Activated CD4-positive, alpha-beta T cell treated with anti-CD3 and anti-CD28 coated beads for 36 hours (primary cell): ENCODE measurements at regions of chr19 and their contacts with region 1.

Region 1: DNA sequence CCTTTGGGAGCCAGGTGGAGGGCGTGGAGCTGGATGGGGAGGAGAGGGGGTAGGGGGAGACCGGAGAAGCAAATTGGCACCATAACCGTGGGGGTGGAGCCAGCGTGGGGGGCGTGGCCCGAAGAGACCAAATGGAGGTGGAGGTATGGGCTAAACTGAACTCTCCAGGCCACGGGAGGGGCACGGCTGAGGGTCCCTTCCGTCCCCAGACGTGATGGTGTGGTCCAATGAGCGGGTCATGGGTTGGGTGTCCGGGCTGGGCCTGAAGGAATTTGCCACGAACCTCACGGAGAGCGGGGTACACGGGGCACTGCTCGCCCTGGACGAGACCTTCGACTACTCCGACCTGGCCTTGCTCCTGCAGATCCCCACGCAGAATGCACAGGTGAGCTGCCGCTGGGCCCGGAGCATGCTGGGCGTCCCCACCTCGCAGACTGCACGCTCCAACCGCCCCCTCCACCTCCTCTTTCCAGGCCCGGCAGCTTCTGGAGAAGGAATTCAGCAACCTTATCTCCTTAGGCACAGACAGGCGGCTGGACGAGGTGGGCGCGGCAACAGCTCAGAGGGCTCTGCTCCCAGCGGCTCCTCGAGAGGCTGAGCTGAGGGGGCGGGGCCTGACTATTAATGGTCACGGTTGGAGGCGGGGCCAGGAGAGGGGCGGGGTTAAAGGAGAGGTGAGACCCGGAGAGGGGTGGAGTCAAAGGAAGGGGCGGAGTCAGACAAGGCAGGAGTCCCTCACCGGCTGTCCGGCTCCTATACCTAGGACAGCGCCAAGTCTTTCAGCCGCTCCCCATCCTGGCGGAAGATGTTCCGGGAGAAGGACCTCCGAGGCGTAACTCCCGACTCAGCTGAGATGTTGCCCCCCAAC is 6.2 kb downstream of the HRC start:
- DNase-seq: peak; percentile 93
- ATAC-seq: peak; percentile 53
- H3K4me3 Mint-ChIP-seq: peak overlapping the region; percentile 67
- H3K27ac Mint-ChIP-seq: no peak overlapping the region
- H3K4me1 Mint-ChIP-seq: peaks cover 28% of the 10 kb centered on the region
- H3K27me3 Mint-ChIP-seq: peaks cover 58% of the 10 kb centered on the region

Region 2: GRCh38 chr19:48899781-48900476 is 249.1 kb before region 1 on chr19 and contains the start of gene NUCB1:
- CTCF ChIA-PET with region 1: no interaction called
- POLR2A ChIA-PET with region 1: no interaction called
- intact Hi-C with region 1: no loop called
- DNase-seq: peak; percentile 100
- ATAC-seq: peak; percentile 95
- H3K4me3 Mint-ChIP-seq: peak within 1 kb of the TSS; percentile 99
- H3K27ac Mint-ChIP-seq: peak within 1 kb of the TSS; percentile 98
- H3K4me1 Mint-ChIP-seq: peaks cover 34% of the 10 kb centered on the region
- H3K27me3 Mint-ChIP-seq: peaks cover 5% of the 10 kb centered on the region
- total RNA-seq, gene NUCB1: 115 to 118 TPM

Region 3: DNA sequence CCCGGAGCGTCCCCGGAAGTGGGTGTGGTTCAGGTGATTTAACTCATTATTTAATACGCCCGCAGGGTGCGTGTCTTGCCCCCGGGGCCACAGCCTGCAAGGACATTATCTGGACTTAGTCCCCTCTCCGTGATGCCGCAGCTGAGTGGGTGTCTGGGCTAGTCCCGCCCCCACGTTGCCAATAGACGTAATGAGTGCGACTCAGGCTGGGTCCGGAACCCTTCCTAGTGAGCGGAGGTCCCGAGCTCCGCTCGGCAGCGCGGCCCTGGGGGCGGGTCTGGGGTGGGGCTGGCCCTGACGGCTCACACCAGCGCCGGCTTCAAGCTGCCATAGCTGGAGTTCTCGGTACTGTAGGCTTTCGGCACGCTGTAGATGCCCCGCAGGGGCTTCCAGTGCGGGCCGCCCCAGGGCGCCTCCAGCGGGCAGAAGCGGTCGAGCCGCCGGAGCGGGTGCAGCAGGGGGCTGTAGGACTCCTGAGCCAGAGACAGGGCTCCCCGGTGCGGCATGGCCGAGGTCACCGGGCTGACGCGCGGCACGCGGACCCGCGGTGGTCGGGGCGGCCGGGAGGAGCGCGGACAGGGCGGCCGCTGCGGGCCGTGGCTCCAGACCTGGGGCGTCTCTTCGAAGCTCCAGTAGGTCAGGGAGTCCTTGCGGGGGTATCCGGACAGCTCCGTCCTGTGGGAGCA is 131.2 kb before region 1 on chr19:
- CTCF ChIA-PET with region 1: no interaction called
- POLR2A ChIA-PET with region 1: no interaction called
- intact Hi-C with region 1: loop called in 1 of 2 experiments (anchors 5 kb)
- DNase-seq: peak; percentile 80
- ATAC-seq: peak; percentile 76
- H3K4me3 Mint-ChIP-seq: peak overlapping the region; percentile 76
- H3K27ac Mint-ChIP-seq: no peak overlapping the region
- H3K4me1 Mint-ChIP-seq: peaks cover 16% of the 10 kb centered on the region
- H3K27me3 Mint-ChIP-seq: peaks cover 6% of the 10 kb centered on the region

Region 4: DNA sequence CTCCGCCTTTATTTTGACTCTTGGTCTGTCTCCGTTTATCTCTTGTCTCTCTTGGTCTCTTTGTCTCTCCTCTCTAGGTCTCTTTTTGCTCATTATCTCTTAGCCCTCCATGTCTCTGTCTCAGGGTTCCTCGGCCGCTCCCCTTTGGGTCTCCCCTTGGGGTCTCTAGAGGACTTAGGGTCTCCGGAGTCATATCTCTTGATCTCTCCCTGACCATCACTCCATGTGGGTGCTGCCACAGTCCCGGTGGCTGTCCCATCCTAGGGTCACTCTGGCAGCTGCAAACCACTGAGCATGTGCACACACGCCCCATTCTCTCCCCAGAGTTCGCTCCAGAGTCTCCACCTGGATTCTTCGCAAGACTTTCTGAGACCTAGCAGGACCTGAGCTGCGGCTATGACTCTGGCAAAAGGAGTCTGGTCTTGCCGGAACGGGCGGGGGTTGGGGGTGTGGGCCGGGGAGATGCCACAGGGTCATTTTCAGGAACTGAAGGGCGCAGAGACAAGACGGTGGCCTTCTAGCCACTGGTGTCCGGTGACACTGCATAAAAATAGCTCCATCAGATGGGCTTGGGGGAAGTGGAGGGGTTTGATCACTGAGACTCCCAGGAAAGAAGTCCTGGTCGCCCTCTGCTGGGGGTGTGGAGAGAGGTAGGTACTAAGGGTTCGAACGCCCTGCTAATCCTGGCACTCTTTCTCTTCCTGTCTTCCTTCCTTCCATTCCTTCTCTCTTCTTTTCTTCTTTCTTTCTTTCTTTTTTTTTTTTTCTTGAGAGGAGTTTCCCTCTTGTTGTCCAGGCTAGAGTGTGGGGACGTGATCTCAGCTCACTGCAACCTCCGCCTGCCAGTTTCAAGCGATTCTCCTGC is 75.3 kb before region 1 on chr19:
- CTCF ChIA-PET with region 1: no interaction called
- POLR2A ChIA-PET with region 1: no interaction called
- intact Hi-C with region 1: loop called in 1 of 2 experiments (anchors 2 kb)
- DNase-seq: peak; percentile 49
- ATAC-seq: no peak
- H3K4me3 Mint-ChIP-seq: no peak overlapping the region
- H3K27ac Mint-ChIP-seq: no peak overlapping the region
- H3K4me1 Mint-ChIP-seq: peaks cover 7% of the 10 kb centered on the region
- H3K27me3 Mint-ChIP-seq: peaks cover 50% of the 10 kb centered on the region

Region 5: GRCh38 chr19:49118565-49119410 is 30.2 kb before region 1 on chr19 and contains the start of gene C19orf73:
- CTCF ChIA-PET with region 1: interaction called, 5 read pairs
- POLR2A ChIA-PET with region 1: no interaction called
- intact Hi-C with region 1: loop called in 1 of 2 experiments (anchors 1 kb)
- DNase-seq: peak; percentile 98
- ATAC-seq: peak; percentile 85
- H3K4me3 Mint-ChIP-seq: peak within 1 kb of the TSS; percentile 80
- H3K27ac Mint-ChIP-seq: peak within 1 kb of the TSS; percentile 84
- H3K4me1 Mint-ChIP-seq: peaks cover 28% of the 10 kb centered on the region
- H3K27me3 Mint-ChIP-seq: peaks cover 8% of the 10 kb centered on the region
- total RNA-seq, gene C19orf73: 1.7 to 2.0 TPM

Region 6: DNA sequence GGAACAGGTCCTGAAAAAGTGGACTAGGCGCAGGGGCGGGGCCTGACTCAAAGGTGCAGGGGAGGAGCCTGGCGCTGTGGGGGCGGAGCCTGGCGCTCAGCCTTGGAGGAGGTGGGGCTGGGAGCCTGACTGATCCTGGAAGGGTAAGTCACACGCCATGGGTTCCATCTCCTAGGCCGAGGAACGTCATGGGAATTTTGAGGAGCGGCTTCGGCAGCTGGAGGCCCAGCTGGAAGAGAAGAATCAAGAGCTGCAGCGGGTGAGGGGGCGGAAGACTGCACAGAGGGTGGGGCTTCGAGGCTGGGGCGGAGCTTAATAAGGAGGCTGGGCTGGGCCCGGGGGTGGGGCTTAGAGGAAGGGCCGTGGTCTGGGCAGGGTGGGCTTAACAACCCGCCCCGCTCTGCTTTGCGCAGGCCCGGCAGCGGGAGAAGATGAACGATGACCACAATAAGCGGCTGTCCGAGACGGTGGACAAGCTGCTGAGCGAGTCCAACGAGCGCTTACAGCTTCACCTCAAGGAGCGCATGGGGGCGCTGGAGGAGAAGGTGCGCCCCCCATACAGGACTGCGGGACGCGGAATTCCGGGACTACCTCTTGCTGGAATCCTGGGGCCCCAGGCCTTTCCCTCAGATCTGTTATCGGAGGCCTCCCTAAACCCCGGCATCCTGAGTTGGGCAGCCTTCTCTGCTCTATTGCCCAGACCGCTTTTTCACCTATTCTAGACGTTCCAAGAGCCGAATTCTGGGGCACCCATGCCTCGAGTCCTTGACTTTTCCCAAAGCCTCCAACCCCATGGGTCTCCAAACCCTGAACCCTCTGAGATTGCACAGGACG is 15.2 kb before region 1 on chr19:
- CTCF ChIA-PET with region 1: interaction called, 21 read pairs
- POLR2A ChIA-PET with region 1: interaction called, 3 read pairs
- intact Hi-C with region 1: loop called in 1 of 2 experiments (anchors 1 kb)
- DNase-seq: peak; percentile 83
- ATAC-seq: peak; percentile 85
- H3K4me3 Mint-ChIP-seq: peak overlapping the region; percentile 59
- H3K27ac Mint-ChIP-seq: no peak overlapping the region
- H3K4me1 Mint-ChIP-seq: peaks cover 14% of the 10 kb centered on the region
- H3K27me3 Mint-ChIP-seq: peaks cover 1% of the 10 kb centered on the region

Region 7: DNA sequence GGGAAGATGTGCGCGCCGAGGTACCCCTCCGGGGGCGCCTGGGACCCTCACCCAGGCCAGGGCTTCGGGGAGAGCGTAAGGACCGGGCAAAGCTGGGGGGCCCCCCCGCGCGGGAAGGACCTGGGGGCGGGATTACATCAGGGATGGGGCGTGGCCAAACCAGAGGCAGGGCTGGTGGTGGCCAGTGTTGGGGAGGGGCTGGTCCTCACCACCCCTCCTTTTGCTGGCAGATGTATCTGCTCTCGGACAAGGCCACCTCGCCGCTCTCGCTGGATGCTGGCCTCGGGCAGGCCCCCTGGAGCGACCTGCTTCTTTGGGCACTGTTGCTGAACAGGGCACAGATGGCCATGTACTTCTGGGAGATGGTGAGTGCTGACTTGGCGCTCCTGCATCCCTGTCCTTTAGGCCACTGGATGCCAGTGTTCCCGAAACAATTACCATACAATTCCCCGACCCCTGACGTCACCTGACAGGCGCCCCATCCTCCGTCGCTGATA is 33.9 kb after region 1 on chr19:
- CTCF ChIA-PET with region 1: no interaction called
- POLR2A ChIA-PET with region 1: no interaction called
- intact Hi-C with region 1: no loop called
- DNase-seq: no peak
- ATAC-seq: no peak
- H3K4me3 Mint-ChIP-seq: no peak overlapping the region
- H3K27ac Mint-ChIP-seq: no peak overlapping the region
- H3K4me1 Mint-ChIP-seq: no peaks in the 10 kb centered on the region
- H3K27me3 Mint-ChIP-seq: peaks cover 8% of the 10 kb centered on the region

Region 8: DNA sequence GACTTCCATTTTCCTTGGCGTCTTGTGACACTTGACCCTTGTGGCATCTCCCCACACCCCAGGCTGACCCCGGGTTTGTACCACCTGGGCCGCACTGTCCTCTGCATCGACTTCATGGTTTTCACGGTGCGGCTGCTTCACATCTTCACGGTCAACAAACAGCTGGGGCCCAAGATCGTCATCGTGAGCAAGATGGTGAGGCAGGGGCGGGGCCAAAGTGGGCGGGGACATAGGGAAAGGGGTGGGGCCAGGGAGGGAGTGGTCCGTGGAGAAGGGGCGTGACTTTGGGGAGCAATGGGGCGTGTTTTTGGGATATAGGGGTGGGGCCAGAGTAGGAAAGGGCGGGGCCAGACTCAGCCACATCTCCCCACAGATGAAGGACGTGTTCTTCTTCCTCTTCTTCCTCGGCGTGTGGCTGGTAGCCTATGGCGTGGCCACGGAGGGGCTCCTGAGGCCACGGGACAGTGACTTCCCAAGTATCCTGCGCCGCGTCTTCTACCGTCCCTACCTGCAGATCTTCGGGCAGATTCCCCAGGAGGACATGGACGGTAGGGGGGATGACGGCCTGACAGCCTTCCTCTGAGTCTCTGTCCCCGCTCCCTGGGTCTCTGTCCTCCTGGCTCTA is 51.3 kb after region 1 on chr19:
- CTCF ChIA-PET with region 1: interaction called, 6 read pairs
- POLR2A ChIA-PET with region 1: no interaction called
- intact Hi-C with region 1: loop called in 1 of 2 experiments (anchors 2 kb)
- DNase-seq: peak; percentile 63
- ATAC-seq: peak; percentile 78
- H3K4me3 Mint-ChIP-seq: no peak overlapping the region
- H3K27ac Mint-ChIP-seq: no peak overlapping the region
- H3K4me1 Mint-ChIP-seq: peaks cover 3% of the 10 kb centered on the region
- H3K27me3 Mint-ChIP-seq: peaks cover 1% of the 10 kb centered on the region

Region 9: GRCh38 chr19:49264258-49264657 is 115.2 kb after region 1 on chr19:
- CTCF ChIA-PET with region 1: no interaction called
- POLR2A ChIA-PET with region 1: no interaction called
- intact Hi-C with region 1: no loop called
- DNase-seq: no peak
- ATAC-seq: no peak
- H3K4me3 Mint-ChIP-seq: no peak overlapping the region
- H3K27ac Mint-ChIP-seq: no peak overlapping the region
- H3K4me1 Mint-ChIP-seq: no peaks in the 10 kb centered on the region
- H3K27me3 Mint-ChIP-seq: peaks cover 18% of the 10 kb centered on the region

Region 10: DNA sequence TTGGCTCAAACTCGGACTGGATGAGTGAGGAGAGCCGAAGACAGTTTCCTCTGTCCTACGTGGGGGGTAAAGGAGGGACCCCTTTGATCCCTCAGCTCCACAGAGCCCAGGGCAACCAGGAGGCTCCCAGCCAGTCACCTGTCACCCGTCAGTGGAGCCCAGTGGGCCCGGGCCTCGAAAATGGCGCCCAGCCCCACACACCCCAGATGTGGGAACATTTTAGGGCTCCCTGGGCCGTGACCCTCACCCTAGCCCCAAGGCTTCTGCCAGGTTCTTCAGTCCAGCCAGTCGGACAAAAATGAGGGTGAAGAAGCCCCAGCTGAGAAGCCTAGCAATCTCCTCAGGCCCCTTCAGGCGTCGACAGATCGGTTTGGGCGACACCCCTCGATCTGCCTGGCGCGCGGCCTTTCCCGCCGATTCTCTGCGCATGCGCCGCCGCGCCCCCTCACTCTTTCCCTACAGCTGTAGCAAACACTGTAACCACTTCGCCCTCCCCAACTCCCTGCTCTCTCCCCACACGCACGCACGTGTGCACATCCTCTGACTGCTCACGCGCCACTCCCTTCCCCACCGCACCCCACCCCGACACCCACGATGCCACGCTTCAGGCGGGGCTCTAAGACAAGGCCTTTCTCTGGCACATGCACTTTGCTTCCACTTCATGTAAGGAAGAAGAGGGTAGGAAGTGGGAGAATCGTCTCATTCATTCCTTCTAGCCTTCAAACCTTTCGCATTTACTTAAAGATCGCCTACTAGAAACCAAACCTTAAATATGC is 176.0 kb after region 1 on chr19 and contains the start of gene SLC6A16:
- CTCF ChIA-PET with region 1: no interaction called
- POLR2A ChIA-PET with region 1: no interaction called
- intact Hi-C with region 1: no loop called
- DNase-seq: no peak
- ATAC-seq: no peak
- H3K4me3 Mint-ChIP-seq: no peak within 1 kb of the TSS
- H3K27ac Mint-ChIP-seq: no peak within 1 kb of the TSS
- H3K4me1 Mint-ChIP-seq: peaks cover 23% of the 10 kb centered on the region
- H3K27me3 Mint-ChIP-seq: no peaks in the 10 kb centered on the region
- total RNA-seq, gene SLC6A16: 0.42 to 1.3 TPM